GM18951 (cell line): ENCODE measurements at regions of chr1 and their contacts with region 1.

Region 1: GRCh38 chr1:145601593-145601992 is 6.2 kb upstream of the GPR89A start:
- POLR2A ChIP-seq: no peak

Region 2: DNA sequence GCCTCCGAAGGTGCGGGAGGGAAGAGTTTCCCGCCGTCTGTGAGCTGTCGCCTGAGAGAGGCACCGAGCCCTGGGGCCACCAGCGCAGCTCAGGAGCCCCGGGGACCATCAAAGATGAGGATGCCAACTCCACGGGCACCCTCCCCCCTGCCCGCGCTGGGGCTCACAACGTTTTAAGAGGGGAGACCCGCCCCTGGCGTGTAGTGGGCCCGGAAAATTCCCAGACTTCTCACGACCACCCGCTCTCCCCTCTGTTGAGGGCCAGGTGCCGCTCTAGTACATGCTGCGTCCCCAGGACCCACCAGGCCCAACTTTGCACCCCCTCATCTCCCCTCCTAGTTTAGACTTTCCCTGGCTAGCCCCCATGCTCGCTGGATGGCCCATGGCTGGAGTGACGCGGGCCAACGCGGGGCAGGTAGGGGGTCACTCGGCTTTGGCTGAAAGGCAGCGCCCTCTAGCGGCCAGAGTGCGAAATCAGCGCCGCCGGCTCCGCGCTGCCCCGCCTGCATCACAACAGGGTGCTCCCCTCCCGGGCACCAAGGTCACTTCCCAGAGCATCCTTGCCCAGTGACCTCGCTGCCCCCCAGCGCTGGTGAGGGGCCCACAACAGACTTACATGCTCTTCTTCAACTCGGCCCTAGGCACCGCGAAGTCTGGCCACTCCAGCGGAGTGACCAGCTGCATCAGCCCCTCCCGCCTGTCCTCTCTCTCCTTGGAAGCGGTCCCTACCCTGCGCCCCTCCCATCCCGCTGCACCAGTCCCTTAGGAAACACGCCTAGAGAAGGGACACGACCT is 119.5 kb after region 1 on chr1:
- in situ Hi-C with region 1: loop called (anchors 25 kb)
- POLR2A ChIP-seq: no peak